Caco-2 (cell line): ENCODE measurements at regions of chr12 and their contacts with region 1.

Region 1: GRCh38 chr12:100234598-100235304 is 32.1 kb downstream of the DEPDC4 start:
- DNase-seq: peak in 1 of 2 experiments; percentile 31
- H3K4me3 ChIP-seq: no peak overlapping the region
- H3K4me3 Mint-ChIP-seq: peak overlapping the region; percentile 23
- H3K27ac Mint-ChIP-seq: no peak overlapping the region
- H3K4me1 ChIP-seq: peaks cover 9% of the 10 kb centered on the region
- H3K4me1 Mint-ChIP-seq: peaks cover 13% of the 10 kb centered on the region
- H3K27me3 ChIP-seq: no peaks in the 10 kb centered on the region
- H3K27me3 Mint-ChIP-seq: no peaks in the 10 kb centered on the region
- CTCF ChIP-seq: peak; percentile 53 to 64

Region 2: GRCh38 chr12:100170313-100170858 is 64.4 kb before region 1 on chr12:
- CTCF ChIA-PET with region 1: no interaction called
- POLR2A ChIA-PET with region 1: no interaction called
- intact Hi-C with region 1: no loop called
- DNase-seq: no peak
- H3K4me3 ChIP-seq: no peak overlapping the region
- H3K4me3 Mint-ChIP-seq: no peak overlapping the region
- H3K27ac Mint-ChIP-seq: no peak overlapping the region
- H3K4me1 ChIP-seq: no peaks in the 10 kb centered on the region
- H3K4me1 Mint-ChIP-seq: no peaks in the 10 kb centered on the region
- H3K27me3 ChIP-seq: no peaks in the 10 kb centered on the region
- H3K27me3 Mint-ChIP-seq: no peaks in the 10 kb centered on the region
- CTCF ChIP-seq: no peak

Region 3: GRCh38 chr12:100554608-100555077 is 319.9 kb after region 1 on chr12:
- CTCF ChIA-PET with region 1: interaction called, 5 read pairs
- POLR2A ChIA-PET with region 1: no interaction called
- intact Hi-C with region 1: loop called (anchors 1 kb)
- DNase-seq: peak; percentile 40 to 83
- H3K4me3 ChIP-seq: no peak overlapping the region
- H3K4me3 Mint-ChIP-seq: no peak overlapping the region
- H3K27ac Mint-ChIP-seq: no peak overlapping the region
- H3K4me1 ChIP-seq: no peaks in the 10 kb centered on the region
- H3K4me1 Mint-ChIP-seq: no peaks in the 10 kb centered on the region
- H3K27me3 ChIP-seq: no peaks in the 10 kb centered on the region
- H3K27me3 Mint-ChIP-seq: peaks cover 2% of the 10 kb centered on the region
- CTCF ChIP-seq: peak; percentile 86 to 96

Region 4: DNA sequence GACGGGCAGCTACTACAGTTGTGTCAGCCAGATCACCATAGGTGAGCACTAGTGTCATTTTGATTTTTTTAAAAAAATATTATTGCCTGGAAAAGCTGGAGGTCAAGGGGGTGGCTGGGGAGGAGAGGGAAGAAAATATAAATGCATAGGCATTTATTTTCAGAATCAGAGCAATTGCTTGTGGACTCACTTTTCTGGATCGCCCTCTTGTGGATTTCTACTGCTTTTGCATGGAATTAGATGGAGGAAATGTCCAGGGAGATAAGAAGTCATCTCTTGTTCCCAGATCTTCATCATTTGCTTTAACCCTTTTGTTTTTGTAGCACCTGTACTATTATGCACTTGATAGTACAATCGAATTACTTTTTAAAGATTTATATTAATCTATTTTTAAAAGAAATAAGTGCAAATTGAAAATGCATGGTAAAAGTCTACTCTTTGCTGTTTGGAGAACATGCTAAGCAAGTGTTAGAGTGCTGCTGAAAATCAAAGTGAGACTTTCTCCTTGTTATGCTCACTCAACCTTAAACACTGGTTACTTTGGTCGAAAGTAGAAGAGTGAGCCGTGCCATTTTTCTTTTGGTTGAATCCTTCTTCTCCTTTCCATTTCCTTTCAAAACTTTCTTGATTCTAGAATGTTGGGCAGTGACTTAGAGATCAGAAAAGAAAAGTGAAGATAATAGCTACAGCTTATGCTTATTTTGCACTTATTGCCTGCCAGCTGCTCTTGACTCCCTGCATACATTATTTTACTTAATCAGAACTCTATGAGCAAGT is 499.3 kb after region 1 on chr12:
- CTCF ChIA-PET with region 1: no interaction called
- POLR2A ChIA-PET with region 1: no interaction called
- intact Hi-C with region 1: loop called (anchors 5 kb)
- DNase-seq: peak in 1 of 2 experiments; percentile 12
- H3K4me3 ChIP-seq: no peak overlapping the region
- H3K4me3 Mint-ChIP-seq: no peak overlapping the region
- H3K27ac Mint-ChIP-seq: no peak overlapping the region
- H3K4me1 ChIP-seq: no peaks in the 10 kb centered on the region
- H3K4me1 Mint-ChIP-seq: no peaks in the 10 kb centered on the region
- H3K27me3 ChIP-seq: no peaks in the 10 kb centered on the region
- H3K27me3 Mint-ChIP-seq: peaks cover 14% of the 10 kb centered on the region
- CTCF ChIP-seq: peak; percentile 58 to 69